A549 (cell line): ENCODE measurements at regions of chr5 and their contacts with region 1.

Region 1: DNA sequence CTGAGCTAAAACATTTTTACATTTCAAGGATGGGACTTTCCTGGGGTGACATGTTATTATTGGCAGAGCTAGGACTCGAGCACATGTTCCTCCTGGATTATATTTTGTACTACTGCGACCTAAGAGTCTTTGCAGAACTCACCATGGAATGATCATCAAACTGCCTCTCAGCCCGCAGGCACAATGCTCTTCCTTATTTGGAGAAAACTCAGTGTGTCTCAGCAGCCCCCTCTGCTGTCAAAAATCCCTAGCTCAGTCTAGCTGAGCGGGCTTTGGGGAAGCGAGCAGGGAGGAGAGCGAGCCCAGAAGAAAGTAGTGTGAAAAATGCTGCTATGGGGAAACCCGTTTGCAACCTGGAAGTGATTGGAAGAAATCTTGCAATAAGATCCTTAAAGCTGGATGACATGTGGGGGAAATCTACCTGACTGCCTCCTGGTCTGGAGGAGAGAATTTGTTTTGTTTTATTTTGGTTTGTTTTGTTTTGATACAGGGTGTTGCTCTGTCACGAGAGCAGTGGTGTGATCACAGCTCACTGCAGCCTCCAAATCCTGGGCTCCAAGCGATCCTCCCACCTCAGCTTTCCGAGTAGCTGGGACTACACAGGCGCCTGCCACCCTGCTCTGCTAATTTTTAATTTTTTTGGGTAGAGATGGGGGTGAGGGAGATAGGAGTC is 89.9 kb upstream of the CLINT1 start:
- DNase-seq: peak; percentile 71 to 92
- ATAC-seq: peak; percentile 99 to 100
- H3K4me3 ChIP-seq: peak overlapping the region; percentile 23; the same call in 2 of the 3 replicates
- H3K27ac ChIP-seq: peak overlapping the region; percentile 50 to 76
- H3K4me1 ChIP-seq: peaks cover 5% of the 10 kb centered on the region
- CTCF ChIP-seq: peak; percentile 85
- EP300 ChIP-seq: no peak
- POLR2A ChIP-seq: no peak
- RAD21 ChIP-seq: peak; percentile 77 to 80

Region 2: DNA sequence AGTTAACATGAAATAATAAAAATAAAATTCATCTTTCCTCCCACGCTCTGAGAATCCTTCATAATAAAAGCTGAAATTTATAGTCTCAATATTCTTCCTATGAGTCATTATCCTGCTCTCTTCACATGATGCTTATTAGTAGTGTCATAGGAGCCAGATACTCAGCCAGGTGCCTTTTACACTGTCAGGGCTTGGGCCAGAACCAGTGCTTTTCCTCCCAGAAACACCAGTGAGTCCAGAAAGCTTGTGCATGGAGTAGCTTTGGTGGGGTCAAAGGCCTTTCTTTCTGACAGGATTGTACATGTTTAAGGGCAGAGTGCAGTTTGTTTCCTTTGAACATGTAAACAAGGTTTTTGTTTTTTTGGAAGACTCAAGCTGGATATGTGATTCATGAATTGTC is 198.6 kb before region 1 on chr5:
- CTCF ChIA-PET with region 1: no interaction called
- POLR2A ChIA-PET with region 1: no interaction called
- DNase-seq: no peak
- ATAC-seq: no peak
- H3K4me3 ChIP-seq: no peak overlapping the region
- H3K27ac ChIP-seq: no peak overlapping the region
- H3K4me1 ChIP-seq: peaks cover 5% of the 10 kb centered on the region; the same call in 2 of the 3 replicates
- CTCF ChIP-seq: no peak
- EP300 ChIP-seq: no peak
- POLR2A ChIP-seq: no peak
- RAD21 ChIP-seq: no peak

Region 3: GRCh38 chr5:157761690-157762621 is 186.9 kb before region 1 on chr5:
- CTCF ChIA-PET with region 1: interaction called, 15 read pairs
- POLR2A ChIA-PET with region 1: no interaction called
- DNase-seq: peak; percentile 67 to 72
- ATAC-seq: peak; percentile 94 to 98
- H3K4me3 ChIP-seq: no peak overlapping the region
- H3K27ac ChIP-seq: no peak overlapping the region
- H3K4me1 ChIP-seq: no peaks in the 10 kb centered on the region
- CTCF ChIP-seq: peak; percentile 88
- EP300 ChIP-seq: no peak
- POLR2A ChIP-seq: no peak
- RAD21 ChIP-seq: peak; percentile 77 to 82

Region 4: DNA sequence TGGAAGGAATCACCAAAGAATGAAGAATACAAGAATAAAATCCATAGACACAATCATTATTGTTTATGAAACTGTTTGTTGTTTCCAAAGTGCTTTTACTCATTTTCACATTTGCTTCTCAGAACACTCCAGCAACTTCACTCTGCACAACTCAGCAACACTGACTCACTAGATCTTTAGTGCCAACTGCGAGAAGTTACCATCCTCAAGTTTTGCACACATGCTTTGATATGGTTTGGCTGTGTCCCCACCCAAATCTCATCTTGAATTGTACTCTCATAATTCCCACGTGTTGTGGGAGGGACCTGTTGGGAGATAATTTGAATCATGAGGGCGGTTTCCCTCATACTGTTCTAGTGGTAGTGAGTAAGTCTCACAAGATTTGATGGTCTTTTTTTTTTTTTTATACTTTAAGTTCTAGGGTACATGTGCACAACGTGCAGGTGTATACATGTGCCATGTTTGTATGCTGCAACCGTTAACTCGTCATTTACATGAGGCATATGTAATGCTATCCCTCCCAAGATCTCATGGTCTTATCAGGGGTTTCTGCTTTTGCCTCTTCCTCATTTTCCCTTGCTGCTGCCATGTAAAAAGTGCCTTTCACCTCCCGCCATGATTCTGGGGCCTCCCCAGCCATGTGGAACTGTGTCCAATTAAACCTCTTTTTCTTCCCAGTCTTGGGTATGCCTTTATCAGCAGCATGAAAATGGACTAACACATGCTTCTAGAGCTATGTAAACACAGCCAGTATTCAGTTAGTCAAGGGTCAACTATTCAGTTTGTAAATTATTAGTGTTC is 126.9 kb before region 1 on chr5:
- CTCF ChIA-PET with region 1: interaction called, 21 read pairs
- POLR2A ChIA-PET with region 1: no interaction called
- DNase-seq: no peak
- ATAC-seq: peak in 1 of 2 experiments; percentile 50; a peak in 1 of 6 replicates
- H3K4me3 ChIP-seq: no peak overlapping the region
- H3K27ac ChIP-seq: no peak overlapping the region
- H3K4me1 ChIP-seq: peaks cover 39% of the 10 kb centered on the region
- CTCF ChIP-seq: no peak
- EP300 ChIP-seq: no peak
- POLR2A ChIP-seq: no peak
- RAD21 ChIP-seq: no peak

Region 5: GRCh38 chr5:157845894-157846598 is 102.8 kb before region 1 on chr5:
- CTCF ChIA-PET with region 1: interaction called, 15 read pairs
- POLR2A ChIA-PET with region 1: no interaction called
- DNase-seq: no peak
- ATAC-seq: peak in 1 of 2 experiments; percentile 58; a peak in 3 of 6 replicates
- H3K4me3 ChIP-seq: no peak overlapping the region
- H3K27ac ChIP-seq: no peak overlapping the region
- H3K4me1 ChIP-seq: peaks cover 20% of the 10 kb centered on the region
- CTCF ChIP-seq: no peak
- EP300 ChIP-seq: no peak
- POLR2A ChIP-seq: no peak
- RAD21 ChIP-seq: no peak

Region 6: DNA sequence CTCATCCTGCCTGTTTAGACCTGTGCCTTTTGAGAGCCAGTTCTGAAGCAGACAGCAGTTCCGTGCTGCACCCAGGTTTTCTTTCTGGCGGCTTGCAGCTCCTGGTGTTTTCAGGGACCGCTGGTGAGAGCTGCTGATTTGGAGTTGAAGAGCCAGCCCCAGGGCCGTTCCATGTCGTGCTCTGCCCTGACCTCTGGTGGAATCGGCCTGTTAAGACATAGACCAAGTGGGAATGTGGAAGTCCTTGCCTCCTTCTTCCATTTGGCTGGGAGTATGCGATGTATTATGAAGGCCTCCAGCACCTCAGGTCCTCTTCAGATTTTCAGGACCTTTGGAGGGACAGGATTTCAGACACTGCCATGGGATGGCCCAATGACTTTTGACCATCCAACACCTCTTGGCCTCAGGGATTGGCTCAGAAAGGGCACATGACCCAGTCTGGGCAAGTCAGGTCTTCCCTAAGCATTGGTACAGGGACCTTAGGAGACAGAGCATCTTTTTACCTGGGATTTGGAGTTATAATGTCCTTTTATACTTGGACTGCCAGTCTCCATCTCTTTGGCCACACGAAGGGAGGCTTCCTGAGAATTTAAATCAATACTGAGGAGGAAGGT is 46.1 kb after region 1 on chr5:
- CTCF ChIA-PET with region 1: interaction called, 11 read pairs
- POLR2A ChIA-PET with region 1: no interaction called
- DNase-seq: peak; percentile 71 to 83
- ATAC-seq: peak; percentile 98 to 99
- H3K4me3 ChIP-seq: no peak overlapping the region
- H3K27ac ChIP-seq: no peak overlapping the region
- H3K4me1 ChIP-seq: 0 out of 3 replicates have a peak, but pooled peaks cover 3% of the 10 kb centered on the region
- CTCF ChIP-seq: peak; percentile 74
- EP300 ChIP-seq: no peak
- POLR2A ChIP-seq: no peak
- RAD21 ChIP-seq: peak; percentile 74 to 78

Region 7: DNA sequence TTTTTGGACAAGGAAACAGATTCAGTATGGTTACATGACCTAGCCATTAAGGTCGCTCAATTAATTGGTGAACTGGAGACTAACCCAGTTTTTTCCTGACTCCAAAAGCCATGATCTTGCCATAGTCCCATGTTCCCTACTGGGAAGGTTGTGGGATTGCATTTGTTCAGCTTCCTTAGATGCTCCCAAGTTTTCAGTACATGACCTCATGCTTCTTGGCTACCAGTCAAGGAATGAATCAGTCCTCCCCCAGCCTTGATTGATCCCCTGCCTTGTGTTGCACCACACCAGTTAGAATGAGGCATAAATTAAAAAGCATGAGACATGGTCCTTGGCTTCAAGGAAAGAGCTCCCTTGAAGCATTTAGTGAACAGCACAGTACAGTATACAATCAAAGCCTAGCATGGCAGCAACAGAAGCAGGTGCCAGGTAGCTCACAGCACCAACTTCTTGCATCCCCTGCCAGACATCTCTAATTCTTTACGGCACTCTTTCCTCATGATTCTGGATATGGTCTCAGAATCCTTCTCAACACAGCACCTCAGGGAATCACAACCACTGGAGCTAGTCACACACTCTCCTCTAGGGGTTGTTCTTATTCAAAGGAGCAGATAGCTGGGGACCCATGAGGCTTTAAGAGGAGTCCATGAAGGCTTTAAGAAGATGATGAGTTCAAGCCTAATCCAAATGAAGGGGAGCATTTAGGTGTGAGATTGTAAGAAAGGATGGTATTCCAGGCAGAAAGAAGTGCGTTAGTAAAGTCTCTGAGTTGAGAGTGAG is 205.5 kb after region 1 on chr5:
- CTCF ChIA-PET with region 1: no interaction called
- POLR2A ChIA-PET with region 1: no interaction called
- DNase-seq: peak in 1 of 2 experiments; percentile 12
- ATAC-seq: peak; percentile 25 to 58; a peak in 2 of 6 replicates
- H3K4me3 ChIP-seq: no peak overlapping the region
- H3K27ac ChIP-seq: no peak overlapping the region
- H3K4me1 ChIP-seq: no peaks in the 10 kb centered on the region
- CTCF ChIP-seq: no peak
- EP300 ChIP-seq: no peak
- POLR2A ChIP-seq: no peak
- RAD21 ChIP-seq: no peak